Activated naive CD4-positive, alpha-beta T cell treated with anti-CD3 and anti-CD28 coated beads, Interleukin-2, amount 10 ng/mL, durations not matched to agents 7 days and 5 days (primary cell): ENCODE measurements at regions of chr22 and their contacts with region 1.

Region 1: DNA sequence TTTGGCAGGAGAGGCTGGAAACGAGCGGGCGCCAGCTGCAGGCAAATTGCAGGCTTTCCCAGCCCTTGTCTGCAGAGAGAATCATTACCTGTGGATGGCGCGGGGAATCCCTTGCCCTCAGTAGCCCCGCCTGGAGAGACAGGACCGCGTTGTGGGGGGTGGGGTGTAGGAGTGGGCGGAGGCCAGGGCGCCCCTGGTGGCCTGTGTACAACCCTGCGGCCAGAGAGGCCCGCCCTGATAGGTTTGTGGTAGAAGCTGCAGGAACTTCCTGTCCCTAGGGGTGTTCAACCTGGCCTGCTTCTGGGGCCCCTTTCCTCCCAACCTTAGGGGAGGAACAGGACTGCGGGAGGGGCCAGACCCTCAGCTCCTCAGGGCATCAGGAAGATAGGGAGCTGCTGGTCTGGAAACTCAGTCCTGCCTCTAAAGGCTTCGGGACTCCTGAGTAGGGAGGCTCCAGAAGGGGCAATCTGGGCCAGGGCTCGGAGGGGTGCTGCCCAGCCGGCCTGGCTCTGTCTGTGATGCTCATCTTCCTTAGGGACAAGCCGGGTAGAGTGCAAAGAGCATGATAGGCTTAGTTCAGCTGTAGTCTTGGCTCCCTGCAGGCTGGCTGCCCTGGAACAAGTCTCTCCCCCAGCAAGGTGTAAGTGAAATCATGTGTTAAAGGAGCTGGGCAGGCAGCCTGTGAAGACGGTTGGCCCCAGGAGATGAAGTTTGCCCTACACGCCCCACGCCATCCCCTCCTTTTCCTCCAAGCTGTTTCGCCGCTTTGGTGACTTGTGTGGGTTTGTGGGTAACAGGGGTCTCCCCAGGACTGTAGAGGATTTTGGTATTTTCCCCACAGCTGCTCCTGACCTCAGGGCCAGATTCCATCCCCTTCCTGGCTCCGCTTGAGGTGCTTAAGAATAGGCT is 24.1 kb upstream of the SUSD2 start:
- DNase-seq: peak; percentile 95
- H3K4me3 Mint-ChIP-seq: peak overlapping the region; percentile 91
- H3K27ac Mint-ChIP-seq: peak overlapping the region; percentile 95
- H3K4me1 Mint-ChIP-seq: peaks cover 62% of the 10 kb centered on the region
- H3K27me3 Mint-ChIP-seq: no peaks in the 10 kb centered on the region

Region 2: GRCh38 chr22:23673826-23674690 is 483.1 kb before region 1 on chr22:
- CTCF ChIA-PET with region 1: no interaction called
- DNase-seq: no peak
- H3K4me3 Mint-ChIP-seq: no peak overlapping the region
- H3K27ac Mint-ChIP-seq: no peak overlapping the region
- H3K4me1 Mint-ChIP-seq: peaks cover 20% of the 10 kb centered on the region
- H3K27me3 Mint-ChIP-seq: no peaks in the 10 kb centered on the region

Region 3: DNA sequence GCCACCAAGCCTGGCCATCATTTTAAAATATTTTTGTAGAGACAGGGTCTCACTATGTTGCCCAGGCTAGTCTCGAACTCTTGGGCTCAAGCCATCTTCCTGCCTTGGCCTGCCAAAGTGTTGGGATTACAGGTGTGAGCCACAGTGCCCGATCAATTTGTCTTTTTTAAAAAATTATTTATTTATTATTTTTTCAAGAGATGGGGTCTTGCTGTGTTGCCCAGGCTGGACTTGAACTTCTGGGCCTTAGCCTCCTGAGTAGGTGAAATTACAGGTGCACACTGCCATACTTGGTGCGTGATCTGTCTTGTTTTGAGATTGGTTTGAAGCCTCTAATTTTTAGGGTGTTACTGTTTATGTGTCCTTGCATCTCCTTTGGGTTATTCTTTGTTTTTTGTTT is 135.9 kb before region 1 on chr22:
- CTCF ChIA-PET with region 1: no interaction called
- DNase-seq: no peak
- H3K4me3 Mint-ChIP-seq: no peak overlapping the region
- H3K27ac Mint-ChIP-seq: no peak overlapping the region
- H3K4me1 Mint-ChIP-seq: peaks cover 20% of the 10 kb centered on the region
- H3K27me3 Mint-ChIP-seq: no peaks in the 10 kb centered on the region

Region 4: GRCh38 chr22:24133187-24133965 is 23.8 kb before region 1 on chr22:
- CTCF ChIA-PET with region 1: interaction called, 24 read pairs
- DNase-seq: peak; percentile 63
- H3K4me3 Mint-ChIP-seq: no peak overlapping the region
- H3K27ac Mint-ChIP-seq: peak overlapping the region; percentile 80
- H3K4me1 Mint-ChIP-seq: peaks cover 13% of the 10 kb centered on the region
- H3K27me3 Mint-ChIP-seq: no peaks in the 10 kb centered on the region

Region 5: DNA sequence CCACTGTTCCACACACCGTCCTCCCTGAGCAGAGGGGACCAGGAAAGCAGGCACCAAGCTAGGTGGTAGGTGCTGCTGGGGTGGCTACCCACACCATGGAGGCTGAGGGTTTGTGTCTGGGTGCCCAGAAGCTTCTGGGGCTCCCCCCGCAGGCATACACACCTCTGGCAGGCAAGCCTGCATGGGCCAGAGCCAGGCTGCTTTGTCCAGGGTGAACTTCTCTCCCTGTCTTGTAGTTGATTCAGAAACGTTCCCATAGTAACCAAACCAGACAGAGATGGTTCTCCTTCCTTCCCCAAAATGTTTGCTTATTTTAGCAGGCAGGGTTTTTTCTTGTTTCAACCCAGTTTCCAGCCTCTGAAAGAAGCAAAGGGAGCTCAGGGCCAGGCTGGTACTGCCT is 16.8 kb before region 1 on chr22:
- CTCF ChIA-PET with region 1: interaction called, 11 read pairs
- DNase-seq: no peak
- H3K4me3 Mint-ChIP-seq: no peak overlapping the region
- H3K27ac Mint-ChIP-seq: no peak overlapping the region
- H3K4me1 Mint-ChIP-seq: peaks cover 53% of the 10 kb centered on the region
- H3K27me3 Mint-ChIP-seq: no peaks in the 10 kb centered on the region

Region 6: DNA sequence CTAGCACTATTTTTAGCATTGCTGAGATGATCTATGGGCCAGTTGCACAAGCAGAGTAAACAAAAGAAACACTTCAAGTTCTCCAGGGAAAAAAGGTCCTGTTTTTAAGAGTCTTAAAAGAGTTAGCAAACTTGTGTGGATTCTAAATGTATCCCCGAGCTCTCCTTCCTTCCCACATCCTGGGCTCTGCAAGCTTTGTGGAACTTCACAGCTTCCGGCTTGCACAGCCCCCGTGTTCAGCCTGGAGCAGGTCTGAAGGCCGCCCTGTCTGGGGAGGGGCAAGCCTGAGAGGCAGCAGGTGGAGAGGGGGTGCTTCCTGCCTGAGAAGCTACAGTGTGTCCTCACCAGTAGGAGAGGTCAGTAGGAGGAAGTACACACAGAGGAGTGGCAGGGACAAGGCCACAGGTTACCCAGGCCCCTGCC is 11.0 kb before region 1 on chr22:
- CTCF ChIA-PET with region 1: interaction called, 11 read pairs
- DNase-seq: peak; percentile 64
- H3K4me3 Mint-ChIP-seq: peak overlapping the region; percentile 3
- H3K27ac Mint-ChIP-seq: peak overlapping the region; percentile 89
- H3K4me1 Mint-ChIP-seq: peaks cover 68% of the 10 kb centered on the region
- H3K27me3 Mint-ChIP-seq: no peaks in the 10 kb centered on the region

Region 7: GRCh38 chr22:24175160-24175808 is 18.1 kb after region 1 on chr22:
- CTCF ChIA-PET with region 1: interaction called, 17 read pairs
- DNase-seq: peak; percentile 78
- H3K4me3 Mint-ChIP-seq: no peak overlapping the region
- H3K27ac Mint-ChIP-seq: peak overlapping the region; percentile 28
- H3K4me1 Mint-ChIP-seq: no peaks in the 10 kb centered on the region
- H3K27me3 Mint-ChIP-seq: no peaks in the 10 kb centered on the region

Region 8: GRCh38 chr22:24244101-24244787 is 87.1 kb after region 1 on chr22:
- CTCF ChIA-PET with region 1: no interaction called
- DNase-seq: no peak
- H3K4me3 Mint-ChIP-seq: no peak overlapping the region
- H3K27ac Mint-ChIP-seq: peak overlapping the region; percentile 80
- H3K4me1 Mint-ChIP-seq: peaks cover 48% of the 10 kb centered on the region
- H3K27me3 Mint-ChIP-seq: peaks cover 7% of the 10 kb centered on the region

Region 9: GRCh38 chr22:24379536-24379935 is 222.4 kb after region 1 on chr22:
- CTCF ChIA-PET with region 1: no interaction called
- DNase-seq: peak; percentile 43
- H3K4me3 Mint-ChIP-seq: peak overlapping the region; percentile 44
- H3K27ac Mint-ChIP-seq: peak overlapping the region; percentile 90
- H3K4me1 Mint-ChIP-seq: peaks cover 40% of the 10 kb centered on the region
- H3K27me3 Mint-ChIP-seq: no peaks in the 10 kb centered on the region